ENCODE measurements at regions of chrX and their contacts with region 1.

Region 1: DNA sequence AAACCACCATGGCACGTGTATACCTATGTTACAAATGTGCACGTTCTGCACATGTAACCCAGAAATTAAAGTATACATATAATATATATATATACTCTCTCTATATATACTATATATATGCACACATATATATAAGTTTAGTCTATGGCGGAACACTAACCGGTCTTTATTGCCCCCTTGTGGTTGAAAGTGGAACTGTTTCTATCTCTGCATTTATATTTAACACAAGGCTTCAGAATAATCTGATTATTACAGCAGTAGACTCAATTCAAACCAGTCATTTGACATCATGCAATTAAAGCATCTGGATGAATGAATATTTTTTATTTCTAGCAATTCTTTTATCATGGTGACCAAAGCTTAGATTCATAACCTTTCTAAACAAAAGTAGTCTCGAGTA is 14.6 kb downstream of the RAB9B start:
- DNase-seq: no peak
- ATAC-seq: no peak
- H3K4me3 ChIP-seq: no peak overlapping the region
- H3K27ac ChIP-seq: no peak overlapping the region
- H3K4me1 ChIP-seq: no peaks in the 10 kb centered on the region
- H3K27me3 ChIP-seq: no peaks in the 10 kb centered on the region

Region 2: GRCh38 chrX:103488332-103488731 is 329.2 kb before region 1 on chrX:
- intact Hi-C with region 1: no loop called
- DNase-seq: no peak
- ATAC-seq: no peak
- H3K4me3 ChIP-seq: no peak overlapping the region
- H3K27ac ChIP-seq: no peak overlapping the region
- H3K4me1 ChIP-seq: no peaks in the 10 kb centered on the region
- H3K27me3 ChIP-seq: no peaks in the 10 kb centered on the region

Region 3: GRCh38 chrX:103533511-103534216 is 283.8 kb before region 1 on chrX:
- intact Hi-C with region 1: loop called in 3 of 4 experiments (anchors 5 to 10 kb)
- DNase-seq: peak; percentile 69 to 91 (median 87)
- ATAC-seq: peak; percentile 73 to 80
- H3K4me3 ChIP-seq: peak overlapping the region; percentile 62
- H3K27ac ChIP-seq: peak overlapping the region; percentile 13
- H3K4me1 ChIP-seq: peaks cover 2% of the 10 kb centered on the region
- H3K27me3 ChIP-seq: no peaks in the 10 kb centered on the region

Region 4: GRCh38 chrX:103686199-103687072 is 131.1 kb before region 1 on chrX and contains the start of gene MORF4L2:
- intact Hi-C with region 1: loop called in 3 of 4 experiments (anchors 5 to 10 kb)
- DNase-seq: peak; percentile 90 to 94 (median 93)
- ATAC-seq: peak; percentile 95 to 96
- H3K4me3 ChIP-seq: peak within 1 kb of the TSS; percentile 90
- H3K27ac ChIP-seq: peak within 1 kb of the TSS; percentile 99
- H3K4me1 ChIP-seq: no peaks in the 10 kb centered on the region
- H3K27me3 ChIP-seq: no peaks in the 10 kb centered on the region
- total RNA-seq, gene MORF4L2: 187 to 269 (median 217) TPM

Region 5: GRCh38 chrX:103697687-103698086 is 119.8 kb before region 1 on chrX:
- intact Hi-C with region 1: loop called in 3 of 4 experiments (anchors 5 to 10 kb)
- DNase-seq: no peak
- ATAC-seq: no peak
- H3K4me3 ChIP-seq: no peak overlapping the region
- H3K27ac ChIP-seq: no peak overlapping the region
- H3K4me1 ChIP-seq: no peaks in the 10 kb centered on the region
- H3K27me3 ChIP-seq: no peaks in the 10 kb centered on the region

Region 6: DNA sequence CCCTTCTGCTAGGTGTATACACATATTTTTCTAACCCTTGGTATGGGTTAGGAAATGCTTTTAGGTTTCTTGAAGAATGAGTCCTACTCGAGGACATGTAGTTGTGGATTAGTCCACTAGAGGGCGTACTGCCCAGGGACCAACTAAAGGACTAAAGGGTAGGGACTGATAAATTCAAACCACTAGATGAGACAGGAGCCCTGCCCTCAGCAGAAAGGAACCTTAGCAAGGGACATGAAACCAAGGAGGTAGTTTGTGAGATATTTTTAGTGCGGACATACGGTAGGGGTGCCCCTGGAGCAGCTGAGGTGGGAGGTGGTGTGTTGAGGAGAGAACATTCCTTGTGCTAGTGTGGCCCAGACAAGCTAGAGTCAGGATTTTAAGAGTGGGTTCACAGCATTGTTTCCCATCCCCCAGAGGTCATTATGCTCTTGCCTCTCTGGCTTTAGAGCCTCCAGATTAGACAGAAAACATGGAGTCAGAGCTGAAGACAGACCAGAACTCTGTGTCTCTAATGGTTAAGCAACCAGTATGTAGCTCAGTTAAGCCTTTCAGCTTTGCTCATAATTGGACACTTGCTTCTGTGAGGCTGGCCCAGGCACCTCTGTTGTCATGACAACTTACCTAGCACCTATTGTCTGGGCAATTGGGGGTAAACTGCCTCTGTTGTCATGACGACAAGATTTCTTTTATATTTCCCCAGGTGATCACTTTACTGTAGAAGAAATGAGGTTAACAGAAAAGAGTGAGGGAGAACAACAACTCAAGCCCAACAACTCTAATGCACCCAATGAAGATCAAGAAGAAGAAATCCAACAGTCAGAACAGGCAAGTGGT is 105.8 kb before region 1 on chrX:
- intact Hi-C with region 1: loop called in 1 of 4 experiments (anchors 10 kb)
- DNase-seq: peak in 2 of 3 donors; percentile 35 to 51
- ATAC-seq: peak in 1 of 2 donors; percentile 60
- H3K4me3 ChIP-seq: no peak overlapping the region
- H3K27ac ChIP-seq: no peak overlapping the region
- H3K4me1 ChIP-seq: no peaks in the 10 kb centered on the region
- H3K27me3 ChIP-seq: no peaks in the 10 kb centered on the region

Region 7: GRCh38 chrX:104419211-104419610 is 601.7 kb after region 1 on chrX:
- intact Hi-C with region 1: no loop called
- DNase-seq: no peak
- ATAC-seq: no peak
- H3K4me3 ChIP-seq: no peak overlapping the region
- H3K27ac ChIP-seq: no peak overlapping the region
- H3K4me1 ChIP-seq: no peaks in the 10 kb centered on the region
- H3K27me3 ChIP-seq: no peaks in the 10 kb centered on the region

Measured in right cardiac atrium (tissue), 5 donors.